ENCODE measurements at regions of chr11 and their contacts with region 1.

Region 1: GRCh38 chr11:60561254-60561653 is 46.1 kb downstream of the MS4A13 start:
- DNase-seq: no peak
- ATAC-seq: no peak
- H3K4me3 ChIP-seq: no peak overlapping the region
- H3K4me3 Mint-ChIP-seq: no peak overlapping the region
- H3K27ac ChIP-seq: no peak overlapping the region
- H3K27ac Mint-ChIP-seq: no peak overlapping the region
- H3K4me1 ChIP-seq: no peaks in the 10 kb centered on the region
- H3K4me1 Mint-ChIP-seq: no peaks in the 10 kb centered on the region
- H3K27me3 ChIP-seq: peaks cover 0 to 5% of the 10 kb centered on the region in 2 experiments
- H3K27me3 Mint-ChIP-seq: peaks cover 5 to 9% of the 10 kb centered on the region in 2 donors

Region 2: DNA sequence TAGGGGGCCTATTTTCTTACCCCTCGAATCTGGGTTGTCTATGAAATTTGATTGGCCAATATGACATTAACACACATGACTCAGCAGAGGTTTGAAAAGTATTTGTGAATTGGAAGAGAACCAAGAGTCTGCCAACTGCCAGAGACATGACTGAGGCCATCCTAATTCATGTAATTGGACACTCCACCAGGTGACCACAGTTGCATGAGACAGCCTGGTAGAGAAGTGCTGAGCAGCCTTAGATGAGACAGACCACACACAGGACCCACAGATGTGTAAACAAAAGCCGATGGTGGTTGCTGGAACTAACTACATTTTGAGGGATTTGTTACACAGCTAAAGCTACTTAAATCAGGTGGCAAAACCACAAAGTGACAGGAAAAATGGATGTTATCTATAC is 132.7 kb before region 1 on chr11:
- CTCF ChIA-PET with region 1: no interaction called
- POLR2A ChIA-PET with region 1: no interaction called
- DNase-seq: no peak
- ATAC-seq: no peak
- H3K4me3 ChIP-seq: no peak overlapping the region
- H3K4me3 Mint-ChIP-seq: no peak overlapping the region
- H3K27ac ChIP-seq: no peak overlapping the region
- H3K27ac Mint-ChIP-seq: no peak overlapping the region
- H3K4me1 ChIP-seq: no peaks in the 10 kb centered on the region
- H3K4me1 Mint-ChIP-seq: no peaks in the 10 kb centered on the region
- H3K27me3 ChIP-seq: no peaks in the 10 kb centered on the region
- H3K27me3 Mint-ChIP-seq: peaks cover 24 to 30% of the 10 kb centered on the region in 2 donors

Region 3: DNA sequence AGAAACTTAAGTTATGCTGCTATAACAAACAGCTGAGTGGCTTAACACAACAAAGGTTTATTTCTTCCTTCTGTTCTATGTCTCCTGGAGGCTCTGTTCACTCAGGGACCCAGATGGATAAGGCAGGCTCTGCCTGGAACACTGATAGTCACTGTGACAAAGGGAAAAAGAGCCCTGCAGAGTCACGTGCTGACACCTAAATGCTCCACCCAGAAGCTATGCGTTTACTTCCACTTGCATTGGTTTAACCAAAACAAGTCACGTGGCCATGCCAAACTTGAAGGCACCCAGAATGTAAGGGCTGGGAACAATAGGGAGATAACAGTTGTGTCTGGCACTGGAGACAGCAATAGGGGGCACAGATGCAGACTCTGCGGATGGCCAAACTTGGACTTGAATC is 192.1 kb after region 1 on chr11:
- CTCF ChIA-PET with region 1: interaction called in 1 of 2 experiments, 11 read pairs
- POLR2A ChIA-PET with region 1: no interaction called
- DNase-seq: no peak
- ATAC-seq: no peak
- H3K4me3 ChIP-seq: no peak overlapping the region
- H3K4me3 Mint-ChIP-seq: no peak overlapping the region
- H3K27ac ChIP-seq: no peak overlapping the region
- H3K27ac Mint-ChIP-seq: no peak overlapping the region
- H3K4me1 ChIP-seq: no peaks in the 10 kb centered on the region
- H3K4me1 Mint-ChIP-seq: no peaks in the 10 kb centered on the region
- H3K27me3 ChIP-seq: peaks cover 0 to 35% of the 10 kb centered on the region in 2 experiments
- H3K27me3 Mint-ChIP-seq: peaks cover 19 to 43% of the 10 kb centered on the region in 2 donors